ENCODE measurements at regions of chr1 and their contacts with region 1.

Region 1: GRCh38 chr1:78145105-78145580 is 99.4 kb downstream of the GIPC2 start:
- DNase-seq: peak; percentile 42
- CTCF ChIP-seq: peak; percentile 91

Region 2: DNA sequence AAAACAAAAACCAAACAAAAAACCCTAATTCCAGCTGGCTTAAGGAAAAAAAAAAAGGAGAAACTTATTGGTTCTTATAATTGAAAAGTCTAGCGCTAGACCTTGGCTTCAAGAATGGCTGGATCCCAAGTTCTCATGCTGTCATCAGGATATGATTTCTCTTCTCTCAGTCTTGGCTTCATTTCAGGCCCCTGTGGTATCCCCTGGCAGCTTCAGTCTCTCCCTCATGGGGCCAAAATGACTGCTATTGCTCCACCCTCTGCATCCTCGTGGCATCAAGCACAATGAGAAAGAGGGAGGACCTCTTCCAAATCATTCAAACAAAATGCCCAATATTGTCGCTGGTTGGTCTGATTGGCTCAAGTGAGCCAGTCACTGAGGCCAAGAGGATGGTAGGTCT is 18.6 kb before region 1 on chr1:
- CTCF ChIA-PET with region 1: interaction called, 103 read pairs
- POLR2A ChIA-PET with region 1: no interaction called
- DNase-seq: no peak
- CTCF ChIP-seq: no peak

Region 3: DNA sequence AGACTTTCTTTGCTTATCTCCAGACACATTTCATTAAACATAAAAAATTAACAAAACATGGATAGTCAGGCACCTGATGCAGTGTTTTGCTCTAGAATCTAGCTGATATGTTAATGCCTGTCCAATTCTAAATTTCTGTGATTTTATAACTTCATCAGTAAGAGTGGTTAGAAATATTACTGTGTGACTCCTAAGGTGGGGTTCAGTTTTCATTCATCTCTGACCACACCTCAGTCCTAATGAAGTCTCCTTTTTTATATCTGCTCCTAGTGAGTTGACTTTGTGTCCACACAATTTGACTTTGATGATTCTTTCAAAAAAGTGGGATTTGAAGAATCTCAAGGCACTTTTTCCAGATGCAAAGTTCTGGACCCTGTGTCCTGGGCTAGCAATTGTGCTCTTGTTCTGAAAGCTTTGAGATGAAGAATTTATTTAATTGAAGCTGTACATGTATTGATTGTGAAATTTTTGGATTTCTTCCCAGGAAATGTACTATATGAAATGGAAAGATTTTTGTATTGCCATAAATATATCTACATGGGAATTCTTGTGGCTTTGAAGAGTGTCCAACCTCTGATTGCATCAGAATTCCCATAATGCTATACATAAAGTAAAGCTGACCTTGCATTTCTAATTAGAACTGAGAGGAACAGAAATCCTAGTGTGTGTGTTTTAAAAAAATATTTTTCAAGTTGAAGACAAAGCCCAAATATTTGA is 11.8 kb after region 1 on chr1:
- CTCF ChIA-PET with region 1: interaction called, 25 read pairs
- POLR2A ChIA-PET with region 1: no interaction called
- DNase-seq: no peak
- CTCF ChIP-seq: no peak

Region 4: DNA sequence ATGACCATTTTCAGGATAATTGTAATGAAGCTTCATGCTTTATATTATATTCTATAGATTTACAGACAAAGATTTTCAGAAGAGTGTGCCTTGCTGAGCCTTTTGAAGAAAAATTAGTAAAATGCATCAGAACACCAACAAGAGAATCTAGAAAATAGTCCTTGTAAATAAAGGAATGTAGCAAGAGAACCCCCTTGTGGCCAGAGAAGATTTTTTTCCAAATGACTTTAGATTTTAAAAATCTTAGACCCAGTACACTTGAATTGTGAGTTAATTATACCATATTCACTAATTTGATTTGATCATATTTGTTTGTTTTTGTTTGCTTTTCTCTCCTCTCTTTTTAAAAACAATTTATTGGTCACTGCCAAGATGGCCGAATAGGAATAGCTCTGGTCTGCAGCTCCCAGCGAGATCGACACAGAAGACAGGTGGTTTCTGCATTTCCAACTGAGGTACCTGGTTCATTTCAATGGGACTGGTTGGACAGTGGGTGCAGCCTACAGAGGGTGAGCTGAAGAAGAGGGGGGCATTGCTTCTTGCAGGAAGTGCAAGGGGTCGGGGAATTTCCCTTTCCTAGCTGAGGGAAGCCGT is 462.3 kb after region 1 on chr1:
- CTCF ChIA-PET with region 1: interaction called, 26 read pairs
- POLR2A ChIA-PET with region 1: no interaction called
- DNase-seq: peak; percentile 13
- CTCF ChIP-seq: peak; percentile 42

Region 5: DNA sequence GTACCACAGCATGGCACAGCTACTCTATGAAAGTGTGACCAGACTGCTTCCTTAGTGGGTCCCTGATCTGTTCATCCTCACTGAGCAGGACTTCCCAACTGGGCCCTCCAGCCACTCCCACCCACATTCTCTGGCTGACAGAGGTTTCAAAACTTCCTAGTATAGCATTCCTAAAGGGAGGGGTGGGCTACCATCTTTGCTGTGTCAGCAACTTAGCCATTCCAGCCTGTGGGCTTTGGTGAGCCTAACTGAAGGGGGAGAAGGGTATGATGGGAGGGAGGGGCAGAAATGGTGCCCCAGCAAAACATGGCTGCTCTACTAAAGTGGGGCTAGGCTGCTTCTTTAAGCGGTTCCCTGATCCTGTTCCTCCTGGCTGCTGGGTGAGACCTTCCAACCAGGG is 1126.6 kb after region 1 on chr1:
- CTCF ChIA-PET with region 1: no interaction called
- POLR2A ChIA-PET with region 1: no interaction called
- DNase-seq: no peak
- CTCF ChIP-seq: no peak